Prostate gland (tissue), 2 donors: ENCODE measurements at regions of chr12 and their contacts with region 1.

Region 1: GRCh38 chr12:48716493-48717251 is at the start of gene CCNT1:
- DNase-seq: peak; percentile 97
- H3K4me3 ChIP-seq: peak within 1 kb of the TSS; percentile 52 to 55
- H3K27ac ChIP-seq: peak within 1 kb of the TSS; percentile 89 to 92
- H3K4me1 ChIP-seq: peaks cover 11% of the 10 kb centered on the region
- H3K27me3 ChIP-seq: no peaks in the 10 kb centered on the region
- CTCF ChIP-seq: peak in 3 of 4 experiments; percentile 24 to 54 (median 52)
- POLR2A ChIP-seq: peak; percentile 16
- total RNA-seq, gene CCNT1: 33.0 to 33.8 TPM

Region 2: DNA sequence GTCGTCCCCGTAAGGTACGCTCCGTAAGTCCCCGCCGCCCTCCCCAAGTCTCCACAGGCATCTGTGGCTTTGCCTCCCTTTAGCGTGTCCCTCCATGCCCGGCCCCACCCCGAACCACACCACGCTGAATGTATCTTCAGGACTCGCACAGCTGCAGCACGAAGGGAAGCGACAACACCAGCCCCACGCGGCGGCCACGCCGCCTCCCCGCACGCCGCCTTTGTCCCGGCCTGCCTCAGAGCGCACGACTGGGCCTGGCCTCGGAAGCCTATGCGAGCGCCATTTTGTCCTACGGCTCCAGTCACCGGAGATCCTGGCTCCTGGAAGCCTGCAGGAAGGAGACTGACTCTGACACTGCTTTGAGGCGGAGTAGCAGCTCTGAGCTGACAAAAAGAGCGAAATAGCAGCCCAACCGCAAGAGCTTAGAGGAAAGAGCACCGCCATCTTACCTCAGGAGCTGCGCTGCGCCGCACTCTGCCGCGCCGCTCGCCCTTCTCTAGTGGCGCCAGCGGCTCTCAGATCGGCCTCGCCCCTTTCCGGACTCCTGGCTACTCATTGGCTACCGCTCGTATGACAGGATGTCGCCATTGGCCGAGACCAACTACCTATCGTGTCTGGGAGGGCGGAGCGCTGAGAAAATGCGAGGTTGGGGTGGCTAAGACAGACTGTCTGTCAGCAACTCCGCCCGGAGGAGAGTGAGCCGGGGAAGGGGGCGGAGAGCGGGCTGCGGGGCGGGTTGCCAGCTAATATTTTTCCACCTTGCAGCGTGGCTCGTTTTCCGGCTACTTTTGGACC is 34.7 kb before region 1 on chr12 and contains the start of gene KANSL2:
- intact Hi-C with region 1: loop called (anchors 1 kb)
- DNase-seq: peak; percentile 99
- H3K4me3 ChIP-seq: peak within 1 kb of the TSS; percentile 90 to 93
- H3K27ac ChIP-seq: peak within 1 kb of the TSS; percentile 89
- H3K4me1 ChIP-seq: no peaks in the 10 kb centered on the region
- H3K27me3 ChIP-seq: no peaks in the 10 kb centered on the region
- CTCF ChIP-seq: no peak
- POLR2A ChIP-seq: peak; percentile 98
- total RNA-seq, gene KANSL2: 53.1 to 53.2 TPM

Region 3: DNA sequence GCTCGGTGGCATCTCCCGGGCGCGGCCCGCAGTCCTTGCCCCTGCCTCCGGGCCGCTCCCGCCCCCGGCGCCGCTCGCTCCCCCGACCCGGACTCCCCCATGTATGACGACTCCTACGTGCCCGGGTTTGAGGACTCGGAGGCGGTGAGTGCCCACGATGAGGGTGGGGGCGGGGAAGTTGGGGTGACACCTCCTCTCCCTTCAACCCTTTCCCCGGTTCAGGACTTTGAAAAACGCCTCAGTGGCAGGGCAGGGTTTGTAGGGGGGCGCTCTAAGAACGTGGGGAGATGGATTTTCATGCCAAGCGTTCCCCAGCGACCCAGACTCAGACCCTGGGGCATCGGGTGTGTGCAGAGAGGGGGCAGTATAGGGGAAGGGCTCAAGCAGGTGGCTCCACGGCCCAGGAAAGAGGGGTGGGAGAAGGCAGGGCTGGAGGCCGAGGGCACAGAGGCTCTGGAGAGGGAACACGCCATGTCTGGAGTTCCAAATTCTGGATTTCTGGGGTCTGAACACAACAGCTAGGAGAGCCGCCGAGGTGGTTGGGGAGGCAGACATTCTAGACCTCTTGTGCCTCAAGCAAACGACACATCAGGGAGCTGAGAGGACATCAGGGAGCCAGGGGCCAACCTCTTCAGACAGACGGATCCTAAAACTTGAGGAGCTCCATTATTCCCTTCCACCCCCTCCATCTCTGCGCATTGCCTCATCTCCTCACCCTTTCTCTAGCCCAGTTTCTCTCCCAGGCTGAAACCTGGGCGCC is 102.3 kb after region 1 on chr12:
- intact Hi-C with region 1: no loop called
- DNase-seq: no peak
- H3K4me3 ChIP-seq: peak overlapping the region; percentile 59 to 69
- H3K27ac ChIP-seq: peak overlapping the region in 1 of 2 donors; percentile 61
- H3K4me1 ChIP-seq: peaks cover 2% of the 10 kb centered on the region
- H3K27me3 ChIP-seq: no peaks in the 10 kb centered on the region
- CTCF ChIP-seq: no peak
- POLR2A ChIP-seq: no peak

Region 4: GRCh38 chr12:49069507-49070346 is 353.1 kb after region 1 on chr12 and contains the start of gene RHEBL1:
- intact Hi-C with region 1: no loop called
- DNase-seq: peak; percentile 98
- H3K4me3 ChIP-seq: peak within 1 kb of the TSS; percentile 47 to 71
- H3K27ac ChIP-seq: peak within 1 kb of the TSS; percentile 60 to 61
- H3K4me1 ChIP-seq: no peaks in the 10 kb centered on the region
- H3K27me3 ChIP-seq: no peaks in the 10 kb centered on the region
- CTCF ChIP-seq: peak in 3 of 4 experiments; percentile 19 to 38 (median 33)
- POLR2A ChIP-seq: peak; percentile 55
- total RNA-seq, gene RHEBL1: 1.1 to 2.3 TPM

Region 5: GRCh38 chr12:49626169-49626835 is 909.6 kb after region 1 on chr12:
- intact Hi-C with region 1: no loop called
- DNase-seq: no peak
- H3K4me3 ChIP-seq: no peak overlapping the region
- H3K27ac ChIP-seq: no peak overlapping the region
- H3K4me1 ChIP-seq: peaks cover 15% of the 10 kb centered on the region
- H3K27me3 ChIP-seq: no peaks in the 10 kb centered on the region
- CTCF ChIP-seq: no peak
- POLR2A ChIP-seq: no peak